Dendritic cell treated with granulocyte-macrophage colony-stimulating factor and Interleukin-4, amounts not matched to agents 40 ng/mL and 50 ng/mL, for 4 days (primary cell): ENCODE measurements at regions of chr14 and their contacts with region 1.

Region 1: DNA sequence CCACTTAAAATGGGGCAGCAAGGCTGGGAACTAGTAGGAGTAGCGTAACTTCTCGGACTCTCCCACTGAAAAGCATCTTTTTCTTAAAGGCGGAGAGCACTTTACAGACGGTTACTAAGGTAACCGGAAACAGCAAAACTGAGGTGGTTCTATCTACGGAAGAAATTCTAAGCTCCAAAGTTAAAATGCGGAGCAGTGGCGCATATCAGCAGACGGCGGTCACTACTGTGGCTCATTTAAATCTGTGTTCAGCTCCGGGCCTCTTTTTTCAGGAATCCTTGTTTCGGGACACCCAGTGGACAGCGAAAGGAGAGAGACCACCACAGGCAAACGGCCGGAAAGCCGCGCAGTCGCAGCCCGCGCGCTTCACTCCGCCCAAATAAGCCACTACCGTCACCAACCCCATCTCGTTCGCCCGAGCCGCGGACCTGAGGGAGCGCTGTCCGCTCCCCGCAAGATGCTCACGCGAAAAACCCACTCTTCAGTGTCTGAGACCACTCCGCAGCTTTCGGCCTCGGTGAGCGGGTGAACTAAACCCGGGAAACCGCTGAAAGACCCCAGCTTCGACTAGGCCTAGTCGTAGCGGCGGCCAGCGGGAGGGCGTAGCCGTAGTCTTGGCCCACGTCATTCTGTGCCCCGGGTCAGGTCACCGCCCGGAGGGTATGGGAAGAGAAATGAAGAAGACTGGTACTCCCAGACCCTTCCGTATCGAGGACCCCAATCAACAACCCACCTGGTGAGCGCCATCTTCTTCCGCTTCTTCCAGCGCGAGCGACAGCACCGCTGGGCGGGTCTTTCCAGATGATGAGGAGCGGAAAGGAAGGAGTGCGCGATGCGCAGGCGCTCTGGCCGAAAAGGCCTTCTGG is at the start of gene SNW1:
- H3K4me3 Mint-ChIP-seq: peak within 1 kb of the TSS; percentile 87
- H3K27ac Mint-ChIP-seq: peak within 1 kb of the TSS; percentile 96
- H3K4me1 Mint-ChIP-seq: peaks cover 38% of the 10 kb centered on the region
- H3K27me3 Mint-ChIP-seq: no peaks in the 10 kb centered on the region

Region 2: DNA sequence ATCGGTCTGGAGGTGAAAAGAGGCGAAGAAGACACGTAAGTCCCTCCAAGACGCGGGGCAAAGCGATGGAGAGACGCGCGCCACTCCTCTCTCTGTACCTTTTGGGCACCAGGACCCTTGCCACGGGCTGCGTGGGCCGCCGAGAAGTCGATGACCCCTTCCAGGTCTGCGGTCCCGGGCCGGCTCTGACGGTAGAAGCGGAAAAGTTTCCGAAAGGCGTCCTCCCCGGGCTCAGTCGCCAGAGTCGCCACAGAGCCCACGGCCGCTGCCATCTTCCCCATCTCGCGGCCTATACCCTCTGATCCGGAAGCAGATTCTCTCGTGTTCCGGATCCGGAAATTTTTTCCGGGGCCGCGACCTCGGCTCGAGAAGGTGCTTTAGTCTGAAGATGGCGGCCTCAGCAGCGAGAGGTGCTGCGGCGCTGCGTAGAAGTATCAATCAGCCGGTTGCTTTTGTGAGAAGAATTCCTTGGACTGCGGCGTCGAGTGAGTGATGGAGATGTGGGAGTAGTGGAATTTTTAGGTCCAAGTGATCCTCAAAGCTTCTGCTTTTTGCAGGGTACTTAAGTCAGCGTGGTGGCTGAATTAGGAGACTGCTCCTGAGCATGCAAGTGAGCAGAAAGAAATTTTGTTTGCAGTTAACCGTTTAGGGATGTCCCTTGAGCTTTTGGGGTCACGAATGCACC is 52.7 kb before region 1 on chr14 and contains the starts of genes ALKBH1 and SLIRP:
- intact Hi-C with region 1: loop called (anchors 2 kb)
- H3K4me3 Mint-ChIP-seq: peak within 1 kb of the TSS; percentile 82
- H3K27ac Mint-ChIP-seq: peak within 1 kb of the TSS; percentile 80
- H3K4me1 Mint-ChIP-seq: peaks cover 29% of the 10 kb centered on the region
- H3K27me3 Mint-ChIP-seq: no peaks in the 10 kb centered on the region

Region 3: GRCh38 chr14:77889971-77890442 is 129.4 kb after region 1 on chr14:
- intact Hi-C with region 1: no loop called
- H3K4me3 Mint-ChIP-seq: no peak overlapping the region
- H3K27ac Mint-ChIP-seq: no peak overlapping the region
- H3K4me1 Mint-ChIP-seq: no peaks in the 10 kb centered on the region
- H3K27me3 Mint-ChIP-seq: no peaks in the 10 kb centered on the region